CD8-positive, alpha-beta T cell (primary cell): ENCODE measurements at regions of chr14 and their contacts with region 1.

Region 1: DNA sequence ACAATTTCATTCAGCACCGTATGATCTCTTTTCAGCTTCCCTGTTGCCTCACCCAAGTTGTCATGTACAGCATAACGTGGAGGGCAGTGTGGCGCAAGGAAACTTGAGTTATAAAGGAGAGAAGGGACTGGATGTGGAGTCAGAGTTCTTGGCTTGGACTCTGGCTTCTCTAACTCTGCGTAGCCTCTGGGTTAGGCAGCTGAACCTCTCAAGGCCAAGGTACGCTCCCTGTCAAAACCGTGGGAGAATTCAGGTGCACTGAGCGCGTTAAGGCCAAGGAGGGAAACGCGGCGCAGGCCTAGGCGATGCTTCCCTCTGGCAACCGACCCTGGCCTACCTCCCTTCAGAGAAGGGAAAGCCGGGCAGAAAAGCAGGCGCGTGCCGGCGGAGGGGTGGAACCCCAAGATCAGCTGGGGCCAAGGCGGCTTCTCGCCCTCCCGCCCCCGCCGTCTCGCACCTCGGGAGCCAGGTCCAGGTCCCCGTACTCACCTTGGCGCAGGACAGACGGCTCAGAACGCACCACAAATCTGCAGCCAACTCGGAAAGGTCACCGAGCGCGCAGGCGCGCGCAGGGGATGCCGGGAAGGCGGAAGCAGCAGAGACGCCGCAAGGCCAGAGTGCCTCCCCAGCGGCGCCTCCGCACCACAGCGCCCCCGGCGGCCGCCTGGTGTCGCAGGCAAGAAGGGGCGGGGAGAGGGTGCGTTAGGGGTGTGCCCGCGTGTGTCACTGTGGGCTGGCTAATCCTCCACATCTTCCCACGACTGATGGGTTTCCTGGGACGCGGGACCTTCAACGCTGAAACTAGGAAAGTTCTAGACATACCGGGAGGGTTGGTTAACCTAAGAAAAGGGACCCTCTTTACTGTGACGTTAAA is 7.0 kb upstream of the TDRD9 start:
- DNase-seq: peak; percentile 90 to 97 (median 94)
- ATAC-seq: peak; percentile 99
- H3K4me3 ChIP-seq: peak overlapping the region; percentile 88 to 91
- H3K4me3 Mint-ChIP-seq: peak overlapping the region; percentile 90
- H3K27ac ChIP-seq: peak overlapping the region; percentile 67 to 71
- H3K27ac Mint-ChIP-seq: peak overlapping the region; percentile 89
- H3K4me1 ChIP-seq: peaks cover 20% of the 10 kb centered on the region
- H3K4me1 Mint-ChIP-seq: peaks cover 24% of the 10 kb centered on the region
- H3K27me3 ChIP-seq: peaks cover 0 to 8% of the 10 kb centered on the region in 2 experiments
- H3K27me3 Mint-ChIP-seq: peaks cover 7% of the 10 kb centered on the region
- CTCF ChIP-seq: peak; percentile 90

Region 2: GRCh38 chr14:102111101-102111500 is 1810.1 kb before region 1 on chr14:
- CTCF ChIA-PET with region 1: no interaction called
- POLR2A ChIA-PET with region 1: no interaction called
- intact Hi-C with region 1: no loop called
- DNase-seq: no peak
- ATAC-seq: no peak
- H3K4me3 ChIP-seq: no peak overlapping the region
- H3K4me3 Mint-ChIP-seq: no peak overlapping the region
- H3K27ac ChIP-seq: no peak overlapping the region
- H3K27ac Mint-ChIP-seq: no peak overlapping the region
- H3K4me1 ChIP-seq: no peaks in the 10 kb centered on the region
- H3K4me1 Mint-ChIP-seq: no peaks in the 10 kb centered on the region
- H3K27me3 ChIP-seq: no peaks in the 10 kb centered on the region
- H3K27me3 Mint-ChIP-seq: no peaks in the 10 kb centered on the region
- CTCF ChIP-seq: no peak

Region 3: DNA sequence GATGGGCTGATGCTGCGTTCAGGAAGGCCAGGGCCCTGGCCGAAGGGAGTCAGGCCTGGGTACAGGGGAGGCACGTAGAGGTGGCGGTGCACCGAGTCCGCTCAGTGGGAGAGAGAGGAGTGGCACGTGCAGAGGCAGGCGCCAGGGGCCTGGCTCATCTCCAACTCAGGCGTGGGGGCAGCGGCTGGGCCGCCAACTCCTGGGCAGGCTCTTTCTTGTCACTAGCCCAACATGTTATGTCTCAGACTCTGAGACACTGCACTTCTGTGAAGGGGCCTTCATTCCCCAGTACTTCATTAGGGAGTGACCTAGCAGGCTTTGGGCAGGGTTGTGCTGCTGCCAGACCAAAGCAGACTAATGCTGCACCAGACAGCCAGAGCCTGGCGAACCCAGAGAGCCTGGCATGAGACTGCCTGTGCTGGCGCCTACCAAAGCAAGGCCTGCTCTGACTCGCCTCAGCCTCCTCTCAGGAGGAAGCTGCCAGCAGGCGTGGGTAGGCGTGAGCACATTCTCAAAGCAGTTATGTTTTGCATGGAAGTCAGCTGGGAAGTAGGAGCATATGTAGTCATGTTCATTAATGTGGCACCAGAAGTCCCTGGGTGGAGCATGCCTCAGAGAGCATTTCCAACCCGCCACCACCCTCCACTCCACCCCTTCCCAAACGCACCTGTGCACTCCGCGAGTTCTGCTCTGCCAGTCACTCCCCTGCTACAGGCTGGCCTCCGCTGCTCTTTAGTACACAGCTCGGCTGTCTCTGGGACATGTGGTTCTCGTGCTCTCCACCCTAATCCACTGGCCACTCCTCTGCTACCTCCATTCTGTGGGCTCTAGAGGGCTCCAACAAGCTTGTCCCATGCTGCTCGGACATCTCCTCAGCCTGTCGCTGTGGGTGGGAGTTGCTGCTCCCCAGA is 408.3 kb before region 1 on chr14:
- CTCF ChIA-PET with region 1: no interaction called
- POLR2A ChIA-PET with region 1: no interaction called
- intact Hi-C with region 1: no loop called
- DNase-seq: no peak
- ATAC-seq: no peak
- H3K4me3 ChIP-seq: no peak overlapping the region
- H3K4me3 Mint-ChIP-seq: no peak overlapping the region
- H3K27ac ChIP-seq: no peak overlapping the region
- H3K27ac Mint-ChIP-seq: no peak overlapping the region
- H3K4me1 ChIP-seq: no peaks in the 10 kb centered on the region
- H3K4me1 Mint-ChIP-seq: no peaks in the 10 kb centered on the region
- H3K27me3 ChIP-seq: no peaks in the 10 kb centered on the region
- H3K27me3 Mint-ChIP-seq: no peaks in the 10 kb centered on the region
- CTCF ChIP-seq: no peak

Region 4: DNA sequence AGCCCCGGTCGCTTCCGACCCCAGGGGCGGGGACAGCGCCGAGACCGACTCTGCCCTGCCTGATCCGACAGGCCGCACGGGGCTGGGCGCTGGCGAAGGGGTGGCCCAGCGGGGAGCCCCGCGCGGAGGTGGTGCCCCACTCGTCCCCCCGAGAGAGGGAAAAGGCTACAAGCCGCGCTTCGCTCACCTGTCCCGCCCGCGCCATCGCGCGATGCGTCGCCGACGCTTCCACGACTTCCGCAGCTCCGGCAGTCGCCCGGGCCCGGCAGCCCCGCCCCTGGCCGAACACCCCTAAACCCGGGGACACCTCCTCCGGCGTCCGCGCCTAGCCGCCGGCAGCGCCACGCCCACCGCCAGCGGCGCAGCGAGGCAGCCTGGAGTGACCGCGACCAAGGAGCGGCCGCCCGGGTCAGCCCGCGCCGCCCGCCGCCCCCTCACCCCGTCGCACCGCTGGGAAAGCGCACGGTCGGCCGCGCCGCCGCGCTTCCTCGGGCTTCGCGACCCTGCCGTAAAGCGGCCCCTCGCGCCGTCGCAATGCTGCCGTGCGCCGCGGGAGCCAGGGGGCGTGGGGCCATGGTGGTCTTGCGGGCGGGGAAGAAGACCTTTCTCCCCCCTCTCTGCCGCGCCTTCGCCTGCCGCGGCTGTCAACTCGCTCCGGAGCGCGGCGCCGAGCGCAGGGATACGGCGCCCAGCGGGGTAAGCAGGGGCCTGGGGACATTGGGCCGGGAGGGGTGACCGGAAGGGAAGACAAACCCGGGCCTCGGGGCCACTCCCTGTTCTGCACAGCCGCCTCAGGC is 358.6 kb before region 1 on chr14 and contains the starts of genes BAG5 and COA8:
- CTCF ChIA-PET with region 1: no interaction called
- POLR2A ChIA-PET with region 1: no interaction called
- intact Hi-C with region 1: loop called (anchors 2 to 5 kb)
- DNase-seq: peak; percentile 68 to 92 (median 86)
- ATAC-seq: peak; percentile 81
- H3K4me3 ChIP-seq: peak within 1 kb of the TSS; percentile 96 to 97
- H3K4me3 Mint-ChIP-seq: peak within 1 kb of the TSS; percentile 83
- H3K27ac ChIP-seq: peak within 1 kb of the TSS; percentile 81 to 86
- H3K27ac Mint-ChIP-seq: peak within 1 kb of the TSS; percentile 87
- H3K4me1 ChIP-seq: peaks cover 46% of the 10 kb centered on the region
- H3K4me1 Mint-ChIP-seq: peaks cover 62% of the 10 kb centered on the region
- H3K27me3 ChIP-seq: no peaks in the 10 kb centered on the region
- H3K27me3 Mint-ChIP-seq: no peaks in the 10 kb centered on the region
- CTCF ChIP-seq: no peak
- total RNA-seq, gene BAG5: 46.2 to 46.3 TPM
- total RNA-seq, gene COA8: 11.6 to 13.4 TPM

Region 5: GRCh38 chr14:103746701-103747100 is 174.5 kb before region 1 on chr14:
- CTCF ChIA-PET with region 1: no interaction called
- POLR2A ChIA-PET with region 1: no interaction called
- intact Hi-C with region 1: no loop called
- DNase-seq: no peak
- ATAC-seq: no peak
- H3K4me3 ChIP-seq: no peak overlapping the region
- H3K4me3 Mint-ChIP-seq: no peak overlapping the region
- H3K27ac ChIP-seq: no peak overlapping the region
- H3K27ac Mint-ChIP-seq: peak overlapping the region; percentile 52
- H3K4me1 ChIP-seq: peaks cover 17% of the 10 kb centered on the region
- H3K4me1 Mint-ChIP-seq: peaks cover 21% of the 10 kb centered on the region
- H3K27me3 ChIP-seq: no peaks in the 10 kb centered on the region
- H3K27me3 Mint-ChIP-seq: no peaks in the 10 kb centered on the region
- CTCF ChIP-seq: no peak

Region 6: DNA sequence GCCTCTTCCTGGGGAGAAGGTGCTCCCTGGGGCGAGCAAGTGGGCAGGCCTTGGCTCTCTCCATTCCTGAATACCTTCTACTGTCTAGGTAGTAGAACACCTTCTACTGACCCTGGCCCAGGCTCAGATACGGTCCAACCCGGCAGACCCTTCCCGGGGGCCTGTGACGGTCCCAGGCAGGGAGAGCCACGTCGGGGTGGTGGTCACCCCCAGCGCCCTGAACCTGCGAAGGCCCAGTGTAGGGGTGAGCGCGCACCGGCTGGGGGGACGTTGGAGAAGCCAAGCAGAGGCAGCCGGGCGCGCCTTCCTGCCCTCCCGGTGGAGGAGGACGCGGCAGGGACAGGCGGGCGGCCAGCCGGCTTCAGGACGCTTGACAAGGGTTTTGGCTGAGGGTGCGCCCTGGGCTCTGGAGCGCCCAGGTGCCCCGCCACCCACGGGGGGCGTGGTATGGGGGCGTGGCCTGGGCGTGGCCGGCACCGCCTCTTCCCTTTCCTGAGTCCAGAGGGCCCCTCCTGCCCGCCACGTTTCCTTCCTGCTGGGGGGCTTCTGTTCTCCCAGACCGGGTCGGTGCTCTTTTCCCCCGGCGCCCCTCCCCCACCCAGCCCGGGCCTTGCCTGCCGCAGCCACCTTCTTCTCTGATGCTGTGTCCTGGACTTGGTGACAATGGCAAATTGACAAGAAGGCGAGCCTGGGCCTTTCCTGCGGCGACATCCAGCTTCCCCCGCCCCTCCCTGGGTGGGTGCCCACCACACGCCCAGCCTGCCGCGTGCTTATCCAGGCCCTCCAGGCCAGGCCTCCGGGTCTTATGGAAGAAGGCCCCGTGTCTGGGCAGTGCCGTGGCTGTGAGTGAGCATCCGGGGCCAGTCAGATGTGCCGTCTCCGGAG is 49.4 kb before region 1 on chr14:
- CTCF ChIA-PET with region 1: no interaction called
- POLR2A ChIA-PET with region 1: interaction called, 3 read pairs
- intact Hi-C with region 1: loop called in 1 of 2 experiments (anchors 2 kb)
- DNase-seq: peak; percentile 42 to 86 (median 77)
- ATAC-seq: peak; percentile 83
- H3K4me3 ChIP-seq: peak overlapping the region; percentile 46 to 68
- H3K4me3 Mint-ChIP-seq: peak overlapping the region; percentile 92
- H3K27ac ChIP-seq: peak overlapping the region; percentile 23 to 61
- H3K27ac Mint-ChIP-seq: peak overlapping the region; percentile 92
- H3K4me1 ChIP-seq: peaks cover 26% of the 10 kb centered on the region
- H3K4me1 Mint-ChIP-seq: peaks cover 19% of the 10 kb centered on the region
- H3K27me3 ChIP-seq: no peaks in the 10 kb centered on the region
- H3K27me3 Mint-ChIP-seq: no peaks in the 10 kb centered on the region
- CTCF ChIP-seq: no peak

Region 7: DNA sequence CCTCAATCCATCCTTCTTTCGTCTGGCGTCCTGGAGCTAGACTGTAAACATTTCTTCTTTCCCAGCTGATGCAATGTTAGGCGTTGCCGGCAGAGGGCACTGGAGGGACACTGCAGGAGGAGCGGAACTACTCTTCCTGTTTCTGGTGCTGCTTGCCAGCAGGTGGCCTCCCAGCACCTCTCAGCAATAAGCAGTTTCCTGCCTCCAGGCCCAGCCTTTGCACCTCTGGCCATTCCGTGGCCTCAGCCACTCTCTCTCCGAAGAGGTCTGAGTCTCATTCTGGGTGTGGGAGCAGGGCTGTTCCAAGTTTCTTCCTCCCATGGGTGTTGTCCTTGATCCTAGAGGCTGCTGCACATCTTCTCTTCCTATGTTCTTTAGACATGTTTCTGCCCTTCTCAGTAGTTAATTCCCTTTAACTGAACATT is 156.8 kb after region 1 on chr14:
- CTCF ChIA-PET with region 1: no interaction called
- POLR2A ChIA-PET with region 1: no interaction called
- intact Hi-C with region 1: loop called in 1 of 2 experiments (anchors 10 kb)
- DNase-seq: peak; percentile 68 to 91 (median 84)
- ATAC-seq: peak; percentile 100
- H3K4me3 ChIP-seq: no peak overlapping the region
- H3K4me3 Mint-ChIP-seq: peak overlapping the region; percentile 2
- H3K27ac ChIP-seq: peak overlapping the region in 1 of 2 experiments; percentile 41
- H3K27ac Mint-ChIP-seq: no peak overlapping the region
- H3K4me1 ChIP-seq: peaks cover 9% of the 10 kb centered on the region
- H3K4me1 Mint-ChIP-seq: peaks cover 8% of the 10 kb centered on the region
- H3K27me3 ChIP-seq: no peaks in the 10 kb centered on the region
- H3K27me3 Mint-ChIP-seq: peaks cover 9% of the 10 kb centered on the region
- CTCF ChIP-seq: peak; percentile 100

Region 8: DNA sequence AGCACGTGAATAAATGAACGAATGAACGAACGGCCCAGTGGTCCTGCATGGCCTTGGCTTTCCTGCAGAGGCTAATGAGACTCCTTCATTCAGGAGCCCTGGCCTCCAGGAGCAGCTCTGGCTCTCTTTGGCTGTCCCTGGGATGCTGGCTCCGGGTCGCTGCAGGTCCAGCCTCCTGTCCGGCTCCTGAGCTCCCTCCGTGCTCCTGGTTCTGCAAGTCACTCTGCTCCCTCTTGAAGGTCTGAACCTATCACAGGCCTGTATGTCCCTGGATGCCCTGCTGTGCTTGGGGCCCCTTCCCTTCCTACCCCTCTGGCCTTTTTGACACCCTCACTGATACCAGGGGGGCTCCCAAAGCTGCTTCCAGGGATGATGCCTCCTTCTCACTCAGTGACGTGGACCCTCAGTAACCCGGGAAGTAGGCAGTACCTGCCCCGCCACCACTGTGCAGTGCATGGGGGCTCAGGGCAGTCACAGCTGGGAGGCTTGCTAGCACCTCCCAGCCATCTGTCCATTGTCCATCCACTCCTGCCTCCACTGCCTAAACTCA is 524.7 kb after region 1 on chr14:
- CTCF ChIA-PET with region 1: no interaction called
- POLR2A ChIA-PET with region 1: no interaction called
- intact Hi-C with region 1: no loop called
- DNase-seq: peak in 1 of 9 experiments; percentile 36
- ATAC-seq: no peak
- H3K4me3 ChIP-seq: no peak overlapping the region
- H3K4me3 Mint-ChIP-seq: no peak overlapping the region
- H3K27ac ChIP-seq: no peak overlapping the region
- H3K27ac Mint-ChIP-seq: no peak overlapping the region
- H3K4me1 ChIP-seq: no peaks in the 10 kb centered on the region
- H3K4me1 Mint-ChIP-seq: no peaks in the 10 kb centered on the region
- H3K27me3 ChIP-seq: peaks cover 3% of the 10 kb centered on the region in 2 experiments
- H3K27me3 Mint-ChIP-seq: peaks cover 36% of the 10 kb centered on the region
- CTCF ChIP-seq: no peak